ENCODE measurements at regions of chr15 and their contacts with region 1.

Region 1: GRCh38 chr15:91706322-91707032 is 147.0 kb upstream of the SLCO3A1 start:
- DNase-seq: peak; percentile 53 to 96 (median 83)

Region 2: GRCh38 chr15:91561371-91562100 is 144.9 kb before region 1 on chr15:
- intact Hi-C with region 1: loop called (anchors 10 kb)
- DNase-seq: no peak